Mammary epithelial cell (primary cell): ENCODE measurements at regions of chr17 and their contacts with region 1.

Region 1: DNA sequence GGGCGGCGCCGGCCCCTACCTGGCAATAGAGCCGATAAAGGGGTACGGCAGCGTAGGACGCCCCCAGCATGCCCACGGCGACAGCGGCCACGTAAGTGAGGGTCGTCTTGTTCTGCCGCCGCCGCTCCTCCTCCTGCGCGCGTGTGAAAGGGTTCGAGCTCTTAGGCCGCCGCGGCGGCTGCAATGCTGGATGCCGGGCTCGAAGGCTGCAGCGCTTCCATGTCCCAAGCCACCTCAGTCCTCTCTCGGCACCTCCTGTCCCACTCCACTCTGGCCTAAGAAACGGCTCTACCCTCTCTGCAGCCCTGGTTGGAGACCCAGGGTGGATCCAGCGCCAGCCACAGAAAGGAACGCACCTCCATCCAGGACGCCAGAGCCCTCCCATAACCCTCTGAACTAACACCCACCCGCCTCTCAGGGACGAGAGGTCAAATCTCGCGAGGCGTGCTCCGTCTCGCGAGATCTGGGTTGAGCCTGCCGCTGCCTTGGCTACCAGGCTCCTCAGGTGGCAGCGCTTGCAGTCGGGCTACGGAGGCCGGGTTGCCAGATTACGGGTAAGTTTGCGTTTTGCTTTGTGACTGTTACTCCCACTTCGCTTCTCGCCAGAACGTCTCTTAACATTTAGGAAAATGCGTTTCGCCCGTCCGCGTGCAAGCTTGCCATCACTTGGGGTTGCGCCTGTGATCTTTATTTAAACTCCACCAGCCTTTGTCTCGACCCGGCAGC is at the starts of genes COX11 and STXBP4:
- DNase-seq: peak; percentile 96
- H3K4me3 ChIP-seq: peak within 1 kb of the TSS; percentile 77 to 96 (median 79)
- H3K27ac ChIP-seq: peak within 1 kb of the TSS; percentile 79
- H3K4me1 ChIP-seq: peaks cover 23% of the 10 kb centered on the region
- H3K27me3 ChIP-seq: no peaks in the 10 kb centered on the region
- CTCF ChIP-seq: no peak
- total RNA-seq, gene COX11: 43.4 to 53.8 TPM
- total RNA-seq, gene STXBP4: 8.0 to 11.7 TPM

Region 2: GRCh38 chr17:54795046-54795445 is 173.4 kb before region 1 on chr17:
- CTCF ChIA-PET with region 1: no interaction called
- dilution Hi-C with region 1: no loop called
- in situ Hi-C with region 1: no loop called
- intact Hi-C with region 1: no loop called
- DNase-seq: no peak
- H3K4me3 ChIP-seq: no peak overlapping the region
- H3K27ac ChIP-seq: no peak overlapping the region
- H3K4me1 ChIP-seq: no peaks in the 10 kb centered on the region
- H3K27me3 ChIP-seq: no peaks in the 10 kb centered on the region
- CTCF ChIP-seq: no peak

Region 3: DNA sequence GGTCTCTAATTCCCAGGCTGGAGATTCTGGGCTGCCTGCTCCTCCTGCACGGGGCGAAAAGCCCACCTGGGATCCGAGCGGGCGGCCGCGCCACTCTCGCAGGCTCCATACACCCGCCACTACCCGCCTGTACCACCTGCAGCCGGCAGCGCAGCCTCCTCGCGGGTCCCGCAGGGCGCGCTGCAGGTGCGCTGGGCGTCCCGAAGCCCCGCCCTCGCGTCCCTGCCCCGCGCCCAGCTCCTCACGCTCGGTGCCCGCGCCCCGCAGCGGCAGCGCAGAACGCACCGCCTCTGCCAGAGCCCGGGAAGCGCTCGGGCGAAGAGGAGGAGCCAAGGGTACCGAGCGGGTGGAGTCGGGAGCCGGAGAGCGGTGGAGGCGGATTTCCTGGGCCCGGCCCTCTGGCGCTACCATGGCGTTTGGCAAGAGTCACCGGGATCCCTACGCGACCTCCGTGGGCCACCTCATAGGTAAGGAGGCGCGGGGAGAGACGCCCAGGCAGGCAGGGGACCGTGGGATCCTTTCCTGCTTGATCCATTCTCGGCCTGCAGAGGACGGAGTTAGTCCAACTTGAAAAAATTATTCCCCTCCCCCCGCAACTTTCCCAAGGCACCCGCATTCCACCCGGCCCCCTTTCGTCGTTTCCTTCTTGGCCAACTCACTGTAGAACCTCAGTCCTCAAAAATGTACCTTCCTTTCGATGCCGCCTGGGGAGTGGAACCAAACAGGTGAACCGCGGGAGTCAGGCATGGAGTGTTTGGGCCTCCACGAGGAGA is 67.8 kb before region 1 on chr17 and contains the start of gene TOM1L1:
- CTCF ChIA-PET with region 1: no interaction called
- dilution Hi-C with region 1: no loop called
- in situ Hi-C with region 1: no loop called
- intact Hi-C with region 1: loop called (anchors 1 kb)
- DNase-seq: peak; percentile 78
- H3K4me3 ChIP-seq: peak within 1 kb of the TSS; percentile 66 to 82 (median 72)
- H3K27ac ChIP-seq: peak within 1 kb of the TSS; percentile 75
- H3K4me1 ChIP-seq: peaks cover 13% of the 10 kb centered on the region
- H3K27me3 ChIP-seq: no peaks in the 10 kb centered on the region
- CTCF ChIP-seq: peak in 1 of 2 donors; percentile 17
- total RNA-seq, gene TOM1L1: 78.0 to 93.5 TPM

Region 4: DNA sequence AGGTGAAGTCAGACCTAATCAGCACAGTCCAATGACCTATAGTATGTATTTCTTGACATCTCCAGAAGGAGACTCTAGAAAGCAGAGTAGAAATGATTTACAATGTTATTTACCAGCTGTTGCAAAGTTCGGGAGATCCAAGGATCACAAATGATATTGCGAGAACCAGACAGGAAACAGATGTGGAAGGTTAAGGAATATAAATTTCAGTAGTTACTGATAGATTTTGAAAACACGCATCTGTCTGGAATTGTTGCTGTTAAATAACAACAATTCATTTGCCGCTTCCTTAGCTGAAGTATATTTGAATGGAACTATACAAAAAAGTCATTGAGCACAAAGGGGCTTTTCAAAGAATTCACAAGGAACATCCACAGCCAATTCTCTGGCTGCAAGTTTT is 72.2 kb after region 1 on chr17:
- CTCF ChIA-PET with region 1: no interaction called
- dilution Hi-C with region 1: no loop called
- in situ Hi-C with region 1: no loop called
- intact Hi-C with region 1: no loop called
- DNase-seq: no peak
- H3K4me3 ChIP-seq: no peak overlapping the region
- H3K27ac ChIP-seq: no peak overlapping the region
- H3K4me1 ChIP-seq: no peaks in the 10 kb centered on the region
- H3K27me3 ChIP-seq: no peaks in the 10 kb centered on the region
- CTCF ChIP-seq: no peak

Region 5: DNA sequence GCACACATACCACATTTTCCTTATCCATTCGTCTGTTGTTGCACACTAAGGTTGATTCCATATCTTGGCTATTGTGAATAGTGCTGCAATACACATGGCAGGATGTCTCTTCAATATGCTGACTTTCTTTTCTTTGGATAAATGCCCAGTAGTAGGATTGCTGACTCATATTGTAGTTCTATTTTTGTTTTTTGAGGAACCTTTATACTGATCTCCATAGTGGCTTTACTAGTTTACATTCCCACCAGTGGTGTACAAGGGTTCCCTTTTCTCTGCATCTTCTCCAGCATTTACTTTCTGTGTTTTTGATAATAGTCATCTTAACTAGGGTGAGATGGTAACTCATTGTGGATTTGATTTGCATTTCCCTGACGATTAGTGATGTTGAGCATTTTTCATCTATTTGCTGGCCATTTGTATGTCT is 118.2 kb after region 1 on chr17:
- CTCF ChIA-PET with region 1: no interaction called
- dilution Hi-C with region 1: no loop called
- in situ Hi-C with region 1: no loop called
- intact Hi-C with region 1: no loop called
- DNase-seq: peak; percentile 75
- H3K4me3 ChIP-seq: no peak overlapping the region
- H3K27ac ChIP-seq: no peak overlapping the region
- H3K4me1 ChIP-seq: no peaks in the 10 kb centered on the region
- H3K27me3 ChIP-seq: no peaks in the 10 kb centered on the region
- CTCF ChIP-seq: no peak